HCT116 (cell line): ENCODE measurements at regions of chr11 and their contacts with region 1.

Region 1: DNA sequence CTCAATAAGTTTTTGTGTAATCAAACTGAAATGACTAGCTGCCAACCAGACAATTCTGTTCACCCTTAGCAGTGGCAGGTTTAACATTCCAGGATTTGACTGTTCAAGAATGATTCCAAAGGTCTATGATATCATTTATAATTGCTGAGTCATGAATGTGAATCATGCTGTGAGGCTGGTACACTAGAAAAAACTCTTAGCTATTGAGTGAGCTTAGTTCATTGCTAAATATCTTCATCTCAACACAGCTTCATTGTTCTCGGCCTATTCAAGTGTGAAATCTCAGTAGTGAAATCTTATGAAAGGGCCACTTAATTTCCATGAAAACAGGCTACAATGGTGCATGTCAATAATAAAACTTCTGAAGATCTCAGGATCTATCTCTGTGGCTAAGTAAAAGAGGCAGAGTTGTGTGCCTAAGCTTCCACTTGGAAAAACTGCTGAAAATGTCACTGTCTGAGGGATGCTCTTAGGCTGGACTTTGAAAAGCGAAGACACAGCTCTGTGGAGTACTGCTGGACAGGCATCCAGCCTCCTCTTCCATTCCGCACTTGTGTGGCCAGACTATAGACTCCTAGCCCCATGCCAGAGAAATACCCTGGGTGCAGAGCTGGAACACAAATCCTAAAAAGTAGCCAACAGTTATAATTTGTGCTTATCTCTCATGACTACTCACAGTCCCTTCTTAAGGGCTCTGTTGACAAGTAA is 12.8 kb downstream of the AQP11 start:
- DNase-seq: no peak
- ATAC-seq: peak; percentile 69
- H3K4me3 ChIP-seq: no peak overlapping the region
- H3K27ac ChIP-seq: peak overlapping the region; percentile 45; the same call in 1 of the 2 replicates
- H3K4me1 ChIP-seq: peaks cover 6 to 18% of the 10 kb centered on the region in 2 experiments; a peak in 3 of 4 replicates
- H3K27me3 ChIP-seq: no peaks in the 10 kb centered on the region
- CTCF ChIP-seq: no peak
- POLR2A ChIP-seq: no peak
- RAD21 ChIP-seq: 0 out of 2 replicates have a peak, but pooled peaks have one; percentile 1

Region 2: GRCh38 chr11:77619576-77620198 is 17.2 kb after region 1 on chr11:
- CTCF ChIA-PET with region 1: interaction called, 13 read pairs
- POLR2A ChIA-PET with region 1: no interaction called
- RAD21 ChIA-PET with region 1: no interaction called
- intact Hi-C with region 1: no loop called
- DNase-seq: peak; percentile 44
- ATAC-seq: peak; percentile 65
- H3K4me3 ChIP-seq: no peak overlapping the region
- H3K27ac ChIP-seq: no peak overlapping the region
- H3K4me1 ChIP-seq: no peaks in the 10 kb centered on the region
- H3K27me3 ChIP-seq: no peaks in the 10 kb centered on the region
- CTCF ChIP-seq: peak; percentile 63 to 80 (median 78)
- POLR2A ChIP-seq: no peak
- RAD21 ChIP-seq: peak; percentile 81